AG04449 (cell line): ENCODE measurements at regions of chr20 and their contacts with region 1.

Region 1: GRCh38 chr20:51372176-51372803 is 170.2 kb downstream of the NFATC2 start:
- DNase-seq: no peak
- H3K4me3 ChIP-seq: no peak overlapping the region
- CTCF ChIP-seq: peak; percentile 90

Region 2: GRCh38 chr20:50987592-50988210 is 384.6 kb before region 1 on chr20:
- CTCF ChIA-PET with region 1: interaction called, 31 read pairs
- POLR2A ChIA-PET with region 1: no interaction called
- DNase-seq: peak; percentile 60
- H3K4me3 ChIP-seq: no peak overlapping the region
- CTCF ChIP-seq: peak; percentile 79

Region 3: DNA sequence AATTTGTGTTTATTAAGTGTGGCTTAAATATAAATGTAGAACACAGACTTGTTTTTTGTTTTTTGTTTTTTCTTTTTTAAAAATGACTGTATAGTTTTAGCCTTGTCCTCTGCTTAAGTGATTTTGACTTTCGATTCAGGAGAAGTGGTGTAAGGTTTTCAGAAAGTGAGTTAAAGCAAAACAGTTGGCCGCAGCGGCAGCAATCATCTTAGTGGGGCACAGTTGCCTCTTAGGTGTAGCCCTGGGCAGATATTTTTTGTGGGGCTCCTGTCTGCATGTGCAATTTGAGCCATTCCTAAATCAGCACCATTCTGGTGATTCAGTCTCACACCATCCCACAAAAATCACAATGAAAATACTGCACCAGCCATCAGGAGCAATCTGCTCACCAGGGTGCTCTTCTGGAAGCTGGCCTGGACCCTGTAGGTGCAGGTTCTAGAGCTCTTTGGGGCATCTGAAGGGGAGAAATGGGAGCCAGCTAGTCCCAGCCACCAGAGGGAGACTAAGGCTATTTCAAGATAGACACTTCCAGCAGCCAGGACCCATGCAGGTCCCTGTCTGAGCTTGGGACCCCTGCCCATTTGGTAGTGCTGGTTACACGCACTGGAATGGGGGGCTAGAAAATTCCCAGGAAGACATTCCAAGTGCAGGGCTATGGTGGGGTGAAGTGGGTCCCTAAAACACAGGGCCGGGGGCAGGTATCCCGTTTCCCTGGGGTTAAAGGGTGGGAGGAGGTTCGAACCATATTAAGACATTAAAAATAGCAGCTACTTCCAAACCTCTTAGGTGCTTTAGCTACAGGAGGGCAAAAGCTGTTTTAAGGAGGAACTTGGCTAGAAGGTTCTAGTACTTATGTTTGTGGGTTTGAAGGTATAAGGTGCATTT is 13.6 kb after region 1 on chr20:
- CTCF ChIA-PET with region 1: interaction called, 13 read pairs
- POLR2A ChIA-PET with region 1: no interaction called
- DNase-seq: no peak
- H3K4me3 ChIP-seq: no peak overlapping the region
- CTCF ChIP-seq: peak; percentile 70

Region 4: DNA sequence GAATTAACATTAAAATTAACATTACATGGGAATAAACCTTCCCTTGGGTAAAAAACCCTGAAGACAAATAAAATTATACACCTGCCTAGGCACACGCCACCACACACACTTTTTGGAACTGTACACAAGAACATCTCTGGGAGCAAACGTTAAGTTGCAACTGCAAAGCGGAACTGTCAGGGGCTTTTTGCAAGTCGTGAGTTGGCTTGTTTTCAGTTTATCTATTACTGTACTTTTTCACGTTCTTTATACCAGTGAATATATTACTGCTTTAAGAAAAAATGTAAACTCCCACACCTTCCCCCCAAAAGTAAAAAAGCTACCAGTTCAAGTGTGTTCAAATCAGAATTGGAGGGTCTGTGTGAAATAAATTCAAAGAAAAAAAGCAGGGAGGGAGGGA is 235.8 kb after region 1 on chr20:
- CTCF ChIA-PET with region 1: interaction called, 18 read pairs
- POLR2A ChIA-PET with region 1: no interaction called
- DNase-seq: no peak
- H3K4me3 ChIP-seq: no peak overlapping the region
- CTCF ChIP-seq: no peak

Region 5: GRCh38 chr20:51616060-51616459 is 243.8 kb after region 1 on chr20:
- CTCF ChIA-PET with region 1: interaction called, 153 read pairs
- POLR2A ChIA-PET with region 1: interaction called, 3 read pairs
- DNase-seq: no peak
- H3K4me3 ChIP-seq: no peak overlapping the region
- CTCF ChIP-seq: peak; percentile 4

Region 6: GRCh38 chr20:51624157-51624731 is 252.0 kb after region 1 on chr20:
- CTCF ChIA-PET with region 1: interaction called, 153 read pairs
- POLR2A ChIA-PET with region 1: no interaction called
- DNase-seq: no peak
- H3K4me3 ChIP-seq: no peak overlapping the region
- CTCF ChIP-seq: peak; percentile 73

Region 7: DNA sequence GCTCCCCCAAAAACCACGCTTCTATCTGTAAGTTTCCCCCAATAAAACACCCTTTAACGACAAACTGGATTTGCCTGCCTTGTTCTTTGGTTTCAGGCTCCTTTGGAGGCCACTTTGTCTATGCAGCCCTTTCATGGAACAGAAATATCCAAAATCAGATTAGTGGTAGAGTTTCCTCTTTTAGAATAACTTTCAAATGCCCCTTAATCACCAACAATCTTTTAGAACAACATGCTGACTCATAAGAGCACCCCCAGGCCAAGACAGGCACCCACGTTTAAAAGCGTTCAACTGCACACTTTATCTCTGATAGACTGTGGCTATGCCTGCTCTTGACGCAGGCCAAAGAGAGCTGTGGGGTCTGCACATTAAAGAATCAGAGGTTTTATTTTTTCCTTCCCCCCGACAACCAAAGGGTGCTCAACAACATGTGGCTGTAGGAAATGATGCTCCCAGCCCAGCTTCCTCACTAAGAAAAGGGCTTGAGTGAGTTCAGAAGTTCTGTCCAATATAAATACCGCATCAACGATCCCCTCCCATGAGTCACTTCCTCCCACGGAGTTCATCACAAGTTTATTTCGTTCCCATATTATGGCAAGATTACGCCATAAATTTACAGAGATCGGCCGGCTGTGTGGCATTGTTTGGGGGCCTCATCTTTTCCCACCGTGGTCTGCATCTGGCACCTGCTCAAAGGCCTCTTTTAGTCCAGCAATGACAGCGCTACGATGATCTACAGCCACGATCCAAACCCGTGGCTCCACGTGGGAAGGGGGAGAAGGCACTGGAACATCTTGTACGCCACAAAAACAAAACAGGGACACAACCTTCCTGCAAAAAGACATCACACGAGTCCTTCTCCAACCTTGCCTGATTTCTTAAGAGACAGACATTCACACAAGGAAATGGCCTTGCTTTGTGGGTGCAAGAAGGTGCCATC is 259.0 kb after region 1 on chr20:
- CTCF ChIA-PET with region 1: interaction called, 153 read pairs
- POLR2A ChIA-PET with region 1: no interaction called
- DNase-seq: peak; percentile 94
- H3K4me3 ChIP-seq: peak overlapping the region; percentile 6
- CTCF ChIP-seq: no peak